ENCODE measurements at regions of chr4 and their contacts with region 1.

Region 1: GRCh38 chr4:3346146-3346545 is 53.3 kb downstream of the RGS12 start:
- DNase-seq: no peak
- ATAC-seq: peak; percentile 93

Region 2: DNA sequence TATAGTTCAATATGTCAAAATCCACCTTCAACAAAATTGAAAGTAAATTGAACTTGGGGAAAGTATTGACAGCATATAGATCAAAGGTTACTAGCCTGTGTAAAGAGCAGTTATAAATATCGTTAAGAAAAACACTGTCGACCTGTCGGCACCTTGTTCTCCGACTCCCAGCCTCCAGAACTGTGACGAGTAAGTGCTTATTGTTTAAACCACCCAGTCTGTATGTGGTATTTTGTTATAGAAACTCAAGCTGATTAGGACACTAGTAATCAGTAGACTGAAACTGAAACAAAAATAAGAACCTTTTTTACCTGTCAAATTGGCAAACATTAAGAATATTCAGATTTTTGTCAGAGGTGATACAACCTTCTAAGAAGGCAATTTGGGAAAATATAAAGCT is 254.7 kb before region 1 on chr4:
- intact Hi-C with region 1: no loop called
- DNase-seq: no peak
- ATAC-seq: peak; percentile 59

Region 3: DNA sequence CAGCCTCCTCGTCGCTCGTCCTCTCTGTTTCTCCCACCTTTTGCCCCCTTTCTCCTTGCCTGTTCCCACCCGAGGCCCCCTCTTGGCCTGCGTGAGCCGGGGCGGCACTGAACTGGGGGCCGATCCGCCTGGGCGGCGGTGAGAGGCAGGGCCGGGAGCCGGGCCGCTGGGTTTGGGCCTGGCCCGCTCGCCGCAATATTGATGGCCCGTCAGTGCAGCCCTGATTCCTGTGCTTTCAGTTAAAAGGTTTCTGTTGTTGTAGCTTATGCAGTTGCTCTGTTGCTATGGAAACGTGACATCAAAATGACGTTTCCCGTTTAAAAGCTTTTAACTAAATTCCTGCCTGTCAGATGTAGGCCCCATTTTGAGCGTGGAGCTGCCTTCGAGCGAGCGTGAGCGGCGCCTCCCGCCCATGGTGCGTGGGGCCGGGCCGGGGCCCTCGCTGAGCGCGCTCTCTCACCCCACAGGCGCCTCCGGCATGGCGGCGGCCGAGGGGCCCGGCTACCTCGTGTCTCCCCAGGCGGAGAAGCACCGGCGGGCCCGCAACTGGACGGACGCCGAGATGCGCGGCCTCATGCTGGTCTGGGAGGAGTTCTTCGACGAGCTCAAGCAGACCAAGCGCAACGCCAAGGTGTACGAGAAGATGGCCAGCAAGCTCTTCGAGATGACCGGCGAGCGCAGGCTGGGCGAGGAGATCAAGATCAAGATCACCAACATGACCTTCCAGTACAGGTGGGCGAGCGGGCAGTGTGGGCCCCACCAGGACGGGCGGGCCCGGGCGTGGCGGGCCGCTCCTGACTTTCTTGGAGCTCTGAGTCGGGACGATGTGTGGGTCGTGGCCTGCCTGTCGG is 97.1 kb before region 1 on chr4 and contains the start of gene MSANTD1:
- intact Hi-C with region 1: no loop called
- DNase-seq: no peak
- ATAC-seq: no peak
- total RNA-seq, gene MSANTD1: 0.73 to 0.82 TPM

Region 4: DNA sequence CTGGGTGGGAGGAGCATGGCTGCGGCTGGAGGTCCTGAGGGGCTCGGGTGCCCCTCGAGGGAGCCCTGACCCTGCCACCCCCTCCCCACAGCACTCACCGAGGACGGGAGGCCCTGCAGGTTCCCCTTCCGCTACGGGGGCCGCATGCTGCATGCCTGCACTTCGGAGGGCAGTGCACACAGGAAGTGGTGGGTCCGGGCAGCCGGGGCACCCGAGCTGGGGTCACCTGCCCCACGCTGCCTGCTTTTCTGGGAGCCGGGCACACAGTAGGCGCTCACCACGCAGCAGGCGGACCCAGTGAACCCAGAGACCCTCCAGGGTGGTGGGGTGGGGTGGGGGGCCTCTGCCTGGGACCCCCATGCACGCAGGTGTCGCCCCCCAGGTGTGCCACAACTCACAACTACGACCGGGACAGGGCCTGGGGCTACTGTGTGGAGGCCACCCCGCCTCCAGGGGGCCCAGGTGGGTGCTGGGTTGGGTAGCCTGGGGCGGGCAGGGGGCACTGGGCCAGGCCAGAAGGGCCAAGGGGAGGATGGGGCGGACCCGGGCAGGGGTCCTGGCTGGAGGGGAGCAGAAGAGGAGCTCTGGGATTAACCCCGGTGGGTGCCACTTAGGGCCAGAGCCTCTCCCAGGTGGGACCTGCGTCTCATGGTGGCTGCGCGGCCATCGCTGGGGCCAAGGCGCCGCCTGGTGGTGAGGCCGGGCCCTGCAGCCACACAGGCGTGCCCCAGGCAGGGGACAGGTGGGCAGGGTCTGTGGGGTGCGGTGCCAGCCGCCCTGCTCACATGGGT is 97.0 kb after region 1 on chr4:
- intact Hi-C with region 1: loop called in 1 of 2 experiments (anchors 2 kb)
- DNase-seq: peak in 1 of 2 donors; percentile 58
- ATAC-seq: peak; percentile 64